Activated CD4-positive, alpha-beta T cell treated with anti-CD3 and anti-CD28 coated beads, Interleukin-2, amount 10 ng/mL, durations not matched to agents 24 days and 14 days (primary cell): ENCODE measurements at regions of chr1 and their contacts with region 1.

Region 1: DNA sequence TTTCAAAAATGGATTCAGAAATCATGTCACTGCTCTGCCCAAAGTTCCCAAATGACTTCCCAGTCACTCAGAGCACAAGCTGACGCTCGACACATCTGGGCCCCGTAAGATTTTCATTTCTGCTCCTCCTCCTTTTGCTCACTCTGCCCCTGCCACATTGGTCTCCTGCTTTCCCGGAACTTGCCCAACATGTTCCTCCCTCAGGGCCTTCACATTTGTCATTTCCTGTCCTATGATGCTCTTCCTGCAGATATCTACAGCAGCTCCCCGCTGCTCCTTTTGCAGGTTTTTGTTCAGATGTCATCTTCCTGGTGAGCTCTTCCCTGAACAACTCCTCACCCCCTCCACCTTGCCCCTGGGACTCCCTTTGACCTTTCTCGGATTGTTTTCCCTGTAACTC is 58.5 kb upstream of the IVNS1ABP start:
- DNase-seq: peak; percentile 58
- H3K4me3 Mint-ChIP-seq: no peak overlapping the region
- H3K27ac Mint-ChIP-seq: no peak overlapping the region
- H3K4me1 Mint-ChIP-seq: peaks cover 18% of the 10 kb centered on the region
- H3K27me3 Mint-ChIP-seq: no peaks in the 10 kb centered on the region

Region 2: GRCh38 chr1:185338719-185339622 is 36.6 kb before region 1 on chr1:
- intact Hi-C with region 1: loop called (anchors 5 kb)
- DNase-seq: peak; percentile 90
- H3K4me3 Mint-ChIP-seq: peak overlapping the region; percentile 57
- H3K27ac Mint-ChIP-seq: peak overlapping the region; percentile 70
- H3K4me1 Mint-ChIP-seq: peaks cover 40% of the 10 kb centered on the region
- H3K27me3 Mint-ChIP-seq: peaks cover 2% of the 10 kb centered on the region